Heart right ventricle (tissue), 16 donors: ENCODE measurements at regions of chr11 and their contacts with region 1.

Region 1: GRCh38 chr11:113289431-113290187 is 24.8 kb upstream of the TTC12 start:
- DNase-seq: peak; percentile 33 to 67
- ATAC-seq: peak; percentile 58 to 82 (median 74)
- H3K4me3 ChIP-seq: no peak overlapping the region
- H3K27ac ChIP-seq: no peak overlapping the region
- H3K4me1 ChIP-seq: peaks cover 0 to 19% (median 0%) of the 10 kb centered on the region in 9 donors
- H3K27me3 ChIP-seq: peaks cover 0 to 16% (median 0%) of the 10 kb centered on the region in 7 donors
- CTCF ChIP-seq: peak; percentile 80 to 95 (median 89)

Region 2: GRCh38 chr11:112219476-112220232 is 1070.0 kb before region 1 on chr11:
- intact Hi-C with region 1: loop called in 3 of 10 experiments (anchors 10 kb)
- DNase-seq: peak in 1 of 2 donors; percentile 54
- ATAC-seq: peak; percentile 83 to 95 (median 92)
- H3K4me3 ChIP-seq: no peak overlapping the region
- H3K27ac ChIP-seq: no peak overlapping the region
- H3K4me1 ChIP-seq: peaks cover 0 to 5% (median 0%) of the 10 kb centered on the region in 9 donors
- H3K27me3 ChIP-seq: no peaks in the 10 kb centered on the region
- CTCF ChIP-seq: peak; percentile 60 to 85 (median 81)

Region 3: DNA sequence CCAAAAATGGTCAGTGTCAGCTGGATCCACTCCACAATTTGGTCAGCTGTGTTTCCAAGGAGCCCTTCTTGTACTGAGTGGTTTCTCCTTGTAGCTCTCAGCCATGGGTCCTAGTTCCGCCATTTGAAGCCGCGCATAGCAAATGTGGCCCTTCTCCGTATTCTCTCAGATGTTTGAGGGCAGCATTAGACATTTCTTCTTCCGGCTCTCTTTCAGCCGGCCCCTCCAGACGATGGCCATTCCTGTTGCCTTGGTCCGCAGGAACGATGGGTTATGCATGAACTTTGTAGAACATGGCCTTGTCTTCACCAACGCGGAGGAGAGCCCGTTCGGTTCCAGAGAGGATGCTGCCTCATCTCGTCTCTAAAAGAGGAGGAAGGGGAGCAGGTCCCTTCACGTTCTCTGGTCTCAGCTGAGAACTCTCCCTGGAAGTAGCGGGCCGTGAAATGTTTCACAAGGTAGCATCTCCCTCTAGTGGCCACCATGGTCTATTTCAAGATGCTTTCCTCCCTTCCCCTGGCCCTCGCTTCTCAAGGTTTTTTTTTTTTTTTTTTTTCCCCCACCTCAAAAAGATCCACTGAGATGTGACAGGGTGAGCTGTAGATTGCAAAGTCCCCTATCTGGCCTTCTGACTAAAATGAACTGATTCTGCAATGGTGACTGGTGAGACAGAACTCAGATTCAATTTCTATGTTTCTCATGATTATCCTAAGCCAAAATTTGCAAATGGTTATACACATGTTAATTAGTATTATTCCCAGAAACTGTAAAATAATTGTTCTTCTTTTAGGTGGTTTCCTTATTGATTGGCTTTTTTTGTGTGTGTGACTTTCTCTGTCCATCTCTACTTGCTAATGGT is 1009.1 kb before region 1 on chr11:
- intact Hi-C with region 1: loop called in 6 of 10 experiments (anchors 5 to 10 kb)
- DNase-seq: peak in 1 of 2 donors; percentile 70
- ATAC-seq: peak; percentile 81 to 96 (median 90)
- H3K4me3 ChIP-seq: peak overlapping the region; percentile 8 to 67 (median 54)
- H3K27ac ChIP-seq: peak overlapping the region in 6 of 10 donors; percentile 5 to 64 (median 38)
- H3K4me1 ChIP-seq: peaks cover 0 to 8% (median 5%) of the 10 kb centered on the region in 9 donors
- H3K27me3 ChIP-seq: no peaks in the 10 kb centered on the region
- CTCF ChIP-seq: peak; percentile 48 to 72 (median 66)

Region 4: GRCh38 chr11:112289588-112290492 is 999.8 kb before region 1 on chr11:
- intact Hi-C with region 1: loop called in 9 of 10 experiments (anchors 2 to 10 kb)
- DNase-seq: peak; percentile 78 to 88
- ATAC-seq: peak; percentile 84 to 96 (median 91)
- H3K4me3 ChIP-seq: peak overlapping the region; percentile 36 to 73 (median 62)
- H3K27ac ChIP-seq: peak overlapping the region in 9 of 10 donors; percentile 42 to 88 (median 78)
- H3K4me1 ChIP-seq: peaks cover 0 to 44% (median 19%) of the 10 kb centered on the region in 9 donors
- H3K27me3 ChIP-seq: no peaks in the 10 kb centered on the region
- CTCF ChIP-seq: peak; percentile 66 to 95 (median 90)

Region 5: GRCh38 chr11:112655371-112655770 is 634.2 kb before region 1 on chr11:
- intact Hi-C with region 1: loop called in 1 of 10 experiments (anchors 10 kb)
- DNase-seq: peak; percentile 74 to 87
- ATAC-seq: peak; percentile 55 to 87 (median 84)
- H3K4me3 ChIP-seq: no peak overlapping the region
- H3K27ac ChIP-seq: peak overlapping the region in 7 of 10 donors; percentile 17 to 72 (median 48)
- H3K4me1 ChIP-seq: peaks cover 8 to 67% (median 22%) of the 10 kb centered on the region in 9 donors
- H3K27me3 ChIP-seq: no peaks in the 10 kb centered on the region
- CTCF ChIP-seq: peak in 6 of 9 donors; percentile 8 to 47 (median 29)

Region 6: DNA sequence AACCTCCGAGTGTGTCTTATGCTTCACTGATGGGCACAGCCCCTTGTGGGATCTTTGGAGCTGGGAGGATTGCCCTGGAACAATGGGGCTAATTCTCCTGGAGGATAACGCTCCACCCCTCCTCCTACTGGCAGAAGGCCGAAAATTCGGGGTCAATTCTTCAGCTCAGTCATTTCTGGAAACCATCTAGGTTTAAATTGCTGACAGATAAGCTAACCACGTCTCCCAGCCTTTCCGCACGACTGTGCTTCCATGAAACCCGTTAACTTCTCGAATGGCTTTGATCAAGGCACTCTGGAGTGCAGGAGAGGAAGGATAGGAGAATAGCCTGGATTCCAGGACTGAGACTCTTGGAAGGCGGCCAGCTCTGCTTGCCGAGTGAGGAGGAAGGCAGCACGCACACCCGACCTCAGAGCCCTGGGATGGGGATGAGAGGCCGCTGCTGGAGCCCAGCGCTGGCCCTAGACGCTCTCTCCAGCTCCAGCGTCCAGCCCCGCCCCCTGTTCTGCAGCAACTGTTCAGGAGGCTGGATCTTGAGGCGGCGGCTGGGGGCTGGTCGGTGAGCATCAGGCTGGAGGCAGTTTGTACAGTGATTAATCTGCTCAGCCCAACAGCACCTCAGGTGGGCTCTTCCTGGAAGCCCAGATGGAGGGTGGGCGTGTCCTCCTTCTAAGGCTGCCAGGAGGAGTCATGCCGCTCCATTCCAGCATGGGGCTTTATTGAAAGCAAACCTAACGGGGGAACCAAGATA is 505.1 kb before region 1 on chr11:
- intact Hi-C with region 1: loop called in 1 of 10 experiments (anchors 10 kb)
- DNase-seq: peak; percentile 67 to 68
- ATAC-seq: peak; percentile 61 to 88 (median 79)
- H3K4me3 ChIP-seq: peak overlapping the region in 8 of 10 donors; percentile 4 to 37 (median 22)
- H3K27ac ChIP-seq: peak overlapping the region; percentile 31 to 87 (median 70)
- H3K4me1 ChIP-seq: peaks cover 17 to 52% (median 45%) of the 10 kb centered on the region in 9 donors
- H3K27me3 ChIP-seq: peaks cover 0 to 5% (median 0%) of the 10 kb centered on the region in 7 donors
- CTCF ChIP-seq: peak in 1 of 9 donors; percentile 7

Region 7: GRCh38 chr11:112795142-112795815 is 494.3 kb before region 1 on chr11:
- intact Hi-C with region 1: loop called in 1 of 10 experiments (anchors 10 kb)
- DNase-seq: no peak
- ATAC-seq: peak in 5 of 8 donors; percentile 8 to 72 (median 41)
- H3K4me3 ChIP-seq: no peak overlapping the region
- H3K27ac ChIP-seq: peak overlapping the region in 2 of 10 donors; percentile 62
- H3K4me1 ChIP-seq: peaks cover 0 to 41% (median 12%) of the 10 kb centered on the region in 9 donors
- H3K27me3 ChIP-seq: no peaks in the 10 kb centered on the region
- CTCF ChIP-seq: peak; percentile 11 to 61 (median 51)

Region 8: GRCh38 chr11:113077379-113077778 is 212.2 kb before region 1 on chr11:
- intact Hi-C with region 1: no loop called
- DNase-seq: peak in 1 of 2 donors; percentile 14
- ATAC-seq: peak in 7 of 8 donors; percentile 13 to 47 (median 28)
- H3K4me3 ChIP-seq: no peak overlapping the region
- H3K27ac ChIP-seq: peak overlapping the region in 3 of 10 donors; percentile 2 to 44 (median 23)
- H3K4me1 ChIP-seq: peaks cover 0 to 44% (median 7%) of the 10 kb centered on the region in 9 donors
- H3K27me3 ChIP-seq: no peaks in the 10 kb centered on the region
- CTCF ChIP-seq: no peak